Endothelial cell of umbilical vein (primary cell): ENCODE measurements at regions of chr9 and their contacts with region 1.

Region 1: GRCh38 chr9:131046581-131047202 is 37.7 kb downstream of the LAMC3 start:
- DNase-seq: peak; percentile 56
- H3K4me3 ChIP-seq: no peak overlapping the region
- H3K27ac ChIP-seq: no peak overlapping the region
- H3K4me1 ChIP-seq: no peaks in the 10 kb centered on the region
- H3K27me3 ChIP-seq: no peaks in the 10 kb centered on the region
- CTCF ChIP-seq: peak; percentile 95 to 98
- POLR2A ChIP-seq: no peak

Region 2: GRCh38 chr9:130701056-130702022 is 345.4 kb before region 1 on chr9:
- CTCF ChIA-PET with region 1: interaction called, 76 read pairs
- POLR2A ChIA-PET with region 1: no interaction called
- dilution Hi-C with region 1: no loop called
- intact Hi-C with region 1: loop called (anchors 5 kb)
- DNase-seq: peak; percentile 84
- H3K4me3 ChIP-seq: no peak overlapping the region
- H3K27ac ChIP-seq: no peak overlapping the region
- H3K4me1 ChIP-seq: peaks cover 2% of the 10 kb centered on the region
- H3K27me3 ChIP-seq: no peaks in the 10 kb centered on the region
- CTCF ChIP-seq: peak; percentile 97 to 99
- POLR2A ChIP-seq: no peak

Region 3: DNA sequence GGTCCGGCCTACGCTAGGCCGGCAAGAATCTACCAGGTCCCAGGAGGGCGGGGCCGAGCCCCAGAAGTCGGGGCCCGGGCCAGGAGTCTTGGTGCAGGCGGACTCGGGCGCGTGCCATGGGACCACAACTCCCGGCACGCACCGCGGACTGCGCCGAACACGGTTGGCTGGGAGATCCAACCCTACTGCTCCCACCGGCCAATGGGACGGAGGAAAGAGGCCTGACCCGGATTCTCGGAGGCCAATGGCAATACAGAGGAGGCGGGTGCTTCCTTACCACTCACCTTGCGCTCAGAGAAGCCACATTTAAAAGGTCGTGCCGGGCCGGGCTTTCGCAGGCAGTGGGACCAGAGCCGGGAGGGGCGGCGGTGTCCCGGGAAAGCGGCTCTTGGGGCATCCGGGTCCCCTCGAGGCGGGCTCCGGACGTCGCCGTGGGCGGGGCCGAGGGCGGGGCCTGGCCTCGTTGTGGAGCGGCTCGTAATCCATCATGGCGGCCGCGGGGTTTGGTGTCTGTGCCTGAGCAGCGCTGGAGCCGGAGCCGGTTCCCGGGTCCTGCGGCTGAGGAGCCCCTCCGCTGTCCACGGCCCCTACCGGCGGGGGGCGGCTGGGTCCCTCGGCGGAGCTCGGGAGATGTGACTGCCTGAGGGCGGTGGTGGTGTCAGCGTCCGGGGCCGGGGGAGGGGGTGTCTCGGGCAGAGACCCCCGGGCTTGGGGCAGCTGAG is 334.0 kb before region 1 on chr9:
- CTCF ChIA-PET with region 1: interaction called, 18 read pairs
- POLR2A ChIA-PET with region 1: no interaction called
- dilution Hi-C with region 1: no loop called
- intact Hi-C with region 1: loop called (anchors 5 kb)
- DNase-seq: peak; percentile 98
- H3K4me3 ChIP-seq: peak overlapping the region; percentile 78 to 97 (median 81)
- H3K27ac ChIP-seq: peak overlapping the region; percentile 81
- H3K4me1 ChIP-seq: peaks cover 12% of the 10 kb centered on the region
- H3K27me3 ChIP-seq: no peaks in the 10 kb centered on the region
- CTCF ChIP-seq: no peak
- POLR2A ChIP-seq: peak; percentile 85

Region 4: GRCh38 chr9:130884980-130885696 is 161.6 kb before region 1 on chr9:
- CTCF ChIA-PET with region 1: interaction called, 14 read pairs
- POLR2A ChIA-PET with region 1: no interaction called
- dilution Hi-C with region 1: no loop called
- intact Hi-C with region 1: loop called (anchors 5 kb)
- DNase-seq: no peak
- H3K4me3 ChIP-seq: no peak overlapping the region
- H3K27ac ChIP-seq: no peak overlapping the region
- H3K4me1 ChIP-seq: no peaks in the 10 kb centered on the region
- H3K27me3 ChIP-seq: no peaks in the 10 kb centered on the region
- CTCF ChIP-seq: no peak
- POLR2A ChIP-seq: no peak

Region 5: DNA sequence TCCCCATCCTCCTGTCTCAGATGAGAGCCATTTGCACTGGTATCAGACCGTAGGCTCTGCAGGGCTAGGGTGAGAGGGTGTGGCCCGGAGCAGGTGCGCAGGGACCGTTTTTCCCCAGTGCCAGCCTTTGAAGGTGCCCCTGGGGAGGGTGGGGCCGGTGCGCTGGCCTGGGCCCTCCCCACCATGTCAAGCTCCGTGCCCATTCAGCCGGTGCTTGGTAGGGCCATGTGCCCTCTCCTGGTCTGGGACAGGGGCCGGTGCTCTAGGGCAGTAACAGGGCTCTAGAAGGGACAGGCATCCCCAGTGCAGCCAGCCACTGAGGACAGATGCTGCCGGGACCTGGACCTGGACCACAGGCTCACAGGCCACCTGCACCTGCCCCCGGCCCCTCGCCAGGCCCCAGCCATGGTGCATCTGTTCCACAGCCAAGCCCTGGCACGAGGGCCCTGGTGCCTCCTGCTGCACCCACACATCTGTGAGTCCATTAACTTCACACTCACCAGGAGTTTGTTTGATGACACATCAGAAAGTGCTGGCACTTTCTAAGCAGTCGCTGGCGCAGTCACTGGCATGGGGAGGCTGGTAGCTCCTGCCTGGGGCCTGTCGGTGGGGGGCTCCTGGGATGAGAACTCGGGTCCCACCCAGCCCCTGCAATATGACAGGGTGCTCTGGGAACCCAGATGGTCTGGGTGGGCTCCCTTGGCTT is 145.0 kb before region 1 on chr9:
- CTCF ChIA-PET with region 1: interaction called, 14 read pairs
- POLR2A ChIA-PET with region 1: interaction called, 8 read pairs
- dilution Hi-C with region 1: no loop called
- intact Hi-C with region 1: no loop called
- DNase-seq: no peak
- H3K4me3 ChIP-seq: no peak overlapping the region
- H3K27ac ChIP-seq: no peak overlapping the region
- H3K4me1 ChIP-seq: no peaks in the 10 kb centered on the region
- H3K27me3 ChIP-seq: peaks cover 0 to 2% of the 10 kb centered on the region in 2 experiments
- CTCF ChIP-seq: no peak
- POLR2A ChIP-seq: no peak

Region 6: GRCh38 chr9:130997925-130998596 is 48.6 kb before region 1 on chr9:
- CTCF ChIA-PET with region 1: interaction called, 25 read pairs
- POLR2A ChIA-PET with region 1: no interaction called
- dilution Hi-C with region 1: no loop called
- intact Hi-C with region 1: no loop called
- DNase-seq: peak; percentile 48
- H3K4me3 ChIP-seq: no peak overlapping the region
- H3K27ac ChIP-seq: no peak overlapping the region
- H3K4me1 ChIP-seq: no peaks in the 10 kb centered on the region
- H3K27me3 ChIP-seq: peaks cover 5 to 11% of the 10 kb centered on the region in 2 experiments
- CTCF ChIP-seq: peak; percentile 74 to 85
- POLR2A ChIP-seq: no peak

Region 7: GRCh38 chr9:131018621-131019020 is 28.1 kb before region 1 on chr9:
- CTCF ChIA-PET with region 1: interaction called, 30 read pairs
- POLR2A ChIA-PET with region 1: no interaction called
- dilution Hi-C with region 1: no loop called
- intact Hi-C with region 1: no loop called
- DNase-seq: no peak
- H3K4me3 ChIP-seq: no peak overlapping the region
- H3K27ac ChIP-seq: no peak overlapping the region
- H3K4me1 ChIP-seq: no peaks in the 10 kb centered on the region
- H3K27me3 ChIP-seq: peaks cover 7 to 14% of the 10 kb centered on the region in 2 experiments
- CTCF ChIP-seq: peak in 1 of 2 donors; percentile 30
- POLR2A ChIP-seq: no peak